Endothelial cell of umbilical vein (primary cell): ENCODE measurements at regions of chr16 and their contacts with region 1.

Region 1: GRCh38 chr16:83068686-83069085 is 441.9 kb downstream of the CDH13 start:
- DNase-seq: peak; percentile 91
- H3K4me3 ChIP-seq: no peak overlapping the region
- H3K27ac ChIP-seq: no peak overlapping the region
- H3K4me1 ChIP-seq: peaks cover 36% of the 10 kb centered on the region
- H3K27me3 ChIP-seq: no peaks in the 10 kb centered on the region
- CTCF ChIP-seq: peak; percentile 34 to 35
- POLR2A ChIP-seq: no peak

Region 2: GRCh38 chr16:82456683-82457082 is 612.0 kb before region 1 on chr16:
- CTCF ChIA-PET with region 1: interaction called, 9 read pairs
- POLR2A ChIA-PET with region 1: no interaction called
- dilution Hi-C with region 1: no loop called
- intact Hi-C with region 1: loop called (anchors 1 kb)
- DNase-seq: peak; percentile 62
- H3K4me3 ChIP-seq: no peak overlapping the region
- H3K27ac ChIP-seq: no peak overlapping the region
- H3K4me1 ChIP-seq: no peaks in the 10 kb centered on the region
- H3K27me3 ChIP-seq: peaks cover 0 to 8% of the 10 kb centered on the region in 2 experiments
- CTCF ChIP-seq: peak; percentile 80 to 89
- POLR2A ChIP-seq: no peak

Region 3: DNA sequence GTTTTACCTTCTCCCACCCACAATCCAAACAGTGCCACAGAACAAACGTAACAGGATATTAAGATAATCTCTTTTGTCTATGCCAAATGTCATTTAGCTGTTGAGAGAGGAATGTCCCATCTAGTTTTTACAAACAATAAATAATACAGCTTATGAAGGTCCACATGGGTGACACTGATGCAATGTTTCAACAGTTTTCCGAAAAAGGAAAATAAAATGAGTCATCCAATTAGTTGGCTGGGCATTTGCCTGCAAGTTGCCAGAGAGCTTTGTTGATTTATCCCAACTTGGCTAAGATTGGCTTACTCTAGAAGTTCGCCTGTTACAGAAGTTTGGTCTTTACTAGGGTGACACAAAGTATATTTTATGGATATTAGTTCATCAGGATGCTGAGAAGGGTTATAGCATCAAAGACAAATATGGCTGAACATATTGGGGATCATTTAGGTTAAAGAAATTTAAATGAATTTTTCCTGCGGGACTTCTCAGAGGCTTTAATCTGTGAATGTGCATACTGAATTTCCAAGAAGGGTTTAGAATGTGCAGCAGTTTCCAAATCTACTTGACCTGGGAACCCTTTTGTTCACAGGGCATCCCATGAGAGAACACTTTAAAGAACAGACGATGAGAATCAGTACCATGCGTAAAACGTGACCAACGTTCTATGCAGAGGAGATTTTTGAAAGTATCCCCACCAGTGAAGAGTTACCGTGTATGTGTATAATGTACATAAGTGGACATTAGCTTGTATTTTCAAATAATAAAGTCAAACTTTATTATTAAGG is 368.8 kb before region 1 on chr16:
- CTCF ChIA-PET with region 1: interaction called, 5 read pairs
- POLR2A ChIA-PET with region 1: no interaction called
- dilution Hi-C with region 1: no loop called
- intact Hi-C with region 1: loop called (anchors 2 kb)
- DNase-seq: peak; percentile 96
- H3K4me3 ChIP-seq: no peak overlapping the region
- H3K27ac ChIP-seq: peak overlapping the region; percentile 76
- H3K4me1 ChIP-seq: peaks cover 46% of the 10 kb centered on the region
- H3K27me3 ChIP-seq: no peaks in the 10 kb centered on the region
- CTCF ChIP-seq: no peak
- POLR2A ChIP-seq: no peak

Region 4: GRCh38 chr16:82814059-82814458 is 254.6 kb before region 1 on chr16:
- CTCF ChIA-PET with region 1: no interaction called
- POLR2A ChIA-PET with region 1: no interaction called
- dilution Hi-C with region 1: no loop called
- intact Hi-C with region 1: loop called (anchors 10 kb)
- DNase-seq: peak; percentile 46
- H3K4me3 ChIP-seq: no peak overlapping the region
- H3K27ac ChIP-seq: peak overlapping the region; percentile 41
- H3K4me1 ChIP-seq: peaks cover 23% of the 10 kb centered on the region
- H3K27me3 ChIP-seq: no peaks in the 10 kb centered on the region
- CTCF ChIP-seq: no peak
- POLR2A ChIP-seq: no peak

Region 5: DNA sequence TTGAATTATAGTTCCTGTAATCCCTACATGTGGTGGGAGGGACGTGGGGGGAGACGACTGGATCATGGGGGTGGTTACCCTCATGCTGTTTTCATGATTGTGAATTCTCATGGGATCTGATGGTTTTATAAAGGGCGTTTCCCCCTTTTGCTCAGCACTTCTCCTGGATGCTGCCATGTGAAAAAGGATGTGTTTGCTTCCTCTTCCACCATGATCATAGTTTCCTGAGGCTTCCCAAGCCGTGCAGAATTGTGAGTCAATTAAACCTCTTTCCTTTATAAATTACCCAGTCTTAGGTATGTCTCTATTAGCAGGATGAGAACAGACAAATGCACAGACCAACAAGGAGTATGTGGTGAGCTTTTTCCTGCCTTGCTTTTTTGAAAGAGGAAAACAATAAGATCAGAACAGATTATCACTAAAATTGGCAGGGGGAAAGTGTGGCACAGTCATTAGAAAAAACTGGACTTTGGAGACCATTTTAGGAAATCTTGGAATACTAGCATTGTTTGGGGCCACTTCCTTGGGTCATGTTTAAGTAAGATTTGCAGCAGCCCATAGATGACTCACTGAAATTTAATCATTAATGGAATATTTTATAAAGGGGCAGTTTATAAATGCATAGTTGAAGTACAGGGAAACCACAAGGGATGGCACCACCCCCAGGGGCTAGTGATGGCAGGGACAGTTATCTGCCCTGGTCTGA is 89.1 kb before region 1 on chr16:
- CTCF ChIA-PET with region 1: no interaction called
- POLR2A ChIA-PET with region 1: interaction called, 3 read pairs
- dilution Hi-C with region 1: no loop called
- intact Hi-C with region 1: loop called (anchors 1 kb)
- DNase-seq: peak; percentile 88
- H3K4me3 ChIP-seq: no peak overlapping the region
- H3K27ac ChIP-seq: peak overlapping the region; percentile 62
- H3K4me1 ChIP-seq: peaks cover 23% of the 10 kb centered on the region
- H3K27me3 ChIP-seq: no peaks in the 10 kb centered on the region
- CTCF ChIP-seq: no peak
- POLR2A ChIP-seq: no peak

Region 6: DNA sequence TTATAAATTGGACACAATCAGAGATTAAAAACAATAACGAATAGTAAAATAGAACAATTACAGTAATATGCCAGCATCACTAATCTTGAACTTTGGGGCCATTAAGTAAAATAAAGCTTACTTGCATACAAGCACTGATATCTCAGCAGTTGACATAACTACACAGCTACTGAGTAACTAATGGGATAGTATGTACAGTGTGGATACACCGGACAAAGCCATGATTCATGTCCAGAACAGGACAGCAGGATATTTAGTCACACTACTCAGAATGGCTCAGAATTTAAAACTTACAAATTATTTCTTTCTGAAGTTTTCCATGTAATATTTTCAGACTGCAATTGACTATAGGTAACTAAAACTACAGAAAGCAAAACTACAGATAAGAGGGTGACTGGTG is 14.4 kb before region 1 on chr16:
- CTCF ChIA-PET with region 1: no interaction called
- POLR2A ChIA-PET with region 1: no interaction called
- dilution Hi-C with region 1: no loop called
- intact Hi-C with region 1: no loop called
- DNase-seq: peak; percentile 48
- H3K4me3 ChIP-seq: no peak overlapping the region
- H3K27ac ChIP-seq: no peak overlapping the region
- H3K4me1 ChIP-seq: peaks cover 6% of the 10 kb centered on the region
- H3K27me3 ChIP-seq: no peaks in the 10 kb centered on the region
- CTCF ChIP-seq: no peak
- POLR2A ChIP-seq: no peak

Region 7: DNA sequence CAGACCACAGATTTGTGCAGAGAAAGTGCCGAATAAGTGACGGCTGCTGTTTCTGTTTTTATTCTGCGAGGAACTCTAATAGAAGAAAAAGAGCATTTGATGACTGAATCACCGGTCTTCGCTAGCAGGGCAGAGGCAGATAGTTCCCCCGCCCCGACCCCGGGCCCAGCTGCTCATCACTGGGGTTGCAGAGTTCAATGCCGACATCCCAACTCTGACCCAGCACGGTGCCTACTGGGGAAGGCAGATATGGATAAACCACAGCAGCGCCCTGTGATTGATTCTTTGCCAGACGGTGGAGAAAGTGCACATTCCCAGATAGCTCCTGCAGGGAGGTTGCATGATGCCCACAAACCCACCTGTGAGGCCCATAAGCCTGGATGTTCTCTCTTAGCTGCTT is 381.2 kb after region 1 on chr16:
- CTCF ChIA-PET with region 1: interaction called, 7 read pairs
- POLR2A ChIA-PET with region 1: no interaction called
- dilution Hi-C with region 1: no loop called
- intact Hi-C with region 1: loop called (anchors 2 kb)
- DNase-seq: no peak
- H3K4me3 ChIP-seq: no peak overlapping the region
- H3K27ac ChIP-seq: no peak overlapping the region
- H3K4me1 ChIP-seq: no peaks in the 10 kb centered on the region
- H3K27me3 ChIP-seq: no peaks in the 10 kb centered on the region
- CTCF ChIP-seq: no peak
- POLR2A ChIP-seq: no peak